ENCODE measurements at regions of chr15 and their contacts with region 1.

Region 1: DNA sequence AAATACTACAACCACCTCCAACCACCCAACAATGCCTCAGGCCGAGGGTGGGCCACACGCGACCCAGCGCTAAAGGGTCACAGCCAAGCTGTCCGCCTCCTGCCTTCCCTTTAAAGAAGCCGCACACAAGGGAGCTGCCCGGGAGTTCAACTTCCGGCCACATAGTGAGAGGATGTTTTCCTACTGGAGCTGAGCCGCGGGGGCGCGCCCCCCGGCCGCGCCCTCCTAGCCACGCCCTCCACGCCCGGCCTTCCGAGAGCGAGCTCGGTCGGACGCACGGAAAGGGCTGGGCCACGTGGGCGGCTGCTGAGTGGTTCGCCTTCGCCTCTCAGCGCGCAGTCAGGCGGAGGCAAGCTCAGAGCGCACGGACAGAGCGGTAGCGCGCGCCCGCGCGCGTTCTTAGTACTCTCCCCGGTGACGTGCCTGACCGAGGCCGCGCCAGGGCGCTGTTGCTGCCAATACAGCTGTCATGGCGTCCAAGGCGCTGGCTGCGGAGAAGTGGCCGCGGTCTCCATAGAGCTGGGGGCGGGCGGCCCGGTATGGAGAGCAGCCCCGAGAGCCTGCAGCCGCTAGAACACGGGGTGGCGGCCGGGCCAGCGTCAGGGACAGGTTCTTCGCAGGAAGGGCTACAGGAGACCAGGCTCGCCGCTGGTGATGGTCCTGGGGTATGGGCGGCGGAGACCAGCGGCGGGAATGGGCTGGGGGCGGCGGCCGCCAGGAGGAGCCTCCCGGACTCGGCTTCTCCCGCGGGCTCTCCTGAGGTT is at the start of gene MINDY2:
- DNase-seq: peak; percentile 93 to 99 (median 94)
- ATAC-seq: peak; percentile 96
- H3K4me3 ChIP-seq: peak within 1 kb of the TSS; percentile 98
- H3K27ac ChIP-seq: peak within 1 kb of the TSS; percentile 91
- H3K4me1 ChIP-seq: peaks cover 13 to 19% of the 10 kb centered on the region in 2 experiments; a peak in 4 of 5 replicates
- H3K27me3 ChIP-seq: no peaks in the 10 kb centered on the region
- CTCF ChIP-seq: peak; percentile 45 to 65 (median 58)
- EP300 ChIP-seq: peak; percentile 55; the same call in 1 of the 2 replicates
- POLR2A ChIP-seq: peak; percentile 91
- RAD21 ChIP-seq: peak; percentile 14 to 34; a peak in 2 of 4 replicates
- polyA plus RNA-seq, gene MINDY2: 2.4 to 3.8 TPM

Region 2: DNA sequence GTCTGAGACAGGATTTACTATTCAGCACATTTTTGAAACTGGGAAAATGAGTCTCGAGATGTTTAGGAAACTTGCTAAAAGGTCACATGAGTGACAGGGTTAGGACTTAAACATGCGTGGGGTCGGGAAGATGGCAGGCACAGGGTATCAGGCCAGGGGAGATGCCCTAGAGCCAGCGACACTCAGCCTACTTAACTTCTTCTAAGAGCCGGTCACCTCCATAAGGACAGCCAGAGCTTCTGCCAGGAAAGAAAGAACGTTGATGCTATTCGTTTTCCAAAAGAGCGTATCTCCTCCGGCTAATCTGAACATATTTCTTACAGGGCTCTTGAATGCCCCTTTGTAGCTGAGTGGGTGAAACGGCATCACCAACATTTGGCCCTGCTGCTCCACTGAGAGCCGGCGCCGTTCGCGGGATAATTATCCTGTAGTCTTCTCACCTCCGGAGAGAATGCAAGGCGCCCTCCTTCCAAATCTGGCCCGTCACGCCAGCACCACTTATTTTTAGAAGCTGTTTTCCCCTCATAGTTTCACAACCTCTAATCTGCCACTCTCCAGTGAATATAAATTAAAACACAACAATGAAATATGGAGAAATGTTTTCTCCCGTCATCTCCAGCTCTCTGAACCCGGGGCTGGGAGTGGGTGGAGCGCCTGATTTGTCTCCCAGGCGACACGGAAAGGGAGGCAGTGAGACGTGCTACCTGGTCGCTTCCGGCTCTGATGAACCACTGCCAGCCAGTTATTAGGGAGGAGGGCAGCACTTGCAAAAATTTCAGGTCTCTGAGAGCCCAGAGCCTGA is 280.8 kb before region 1 on chr15:
- CTCF ChIA-PET with region 1: no interaction called
- POLR2A ChIA-PET with region 1: no interaction called
- in situ Hi-C with region 1: no loop called
- intact Hi-C with region 1: no loop called
- DNase-seq: no peak
- ATAC-seq: no peak
- H3K4me3 ChIP-seq: no peak overlapping the region
- H3K27ac ChIP-seq: no peak overlapping the region
- H3K4me1 ChIP-seq: peaks cover 12 to 20% of the 10 kb centered on the region in 2 experiments; a peak in 4 of 5 replicates
- H3K27me3 ChIP-seq: no peaks in the 10 kb centered on the region
- CTCF ChIP-seq: no peak
- EP300 ChIP-seq: no peak
- POLR2A ChIP-seq: no peak
- RAD21 ChIP-seq: no peak

Region 3: DNA sequence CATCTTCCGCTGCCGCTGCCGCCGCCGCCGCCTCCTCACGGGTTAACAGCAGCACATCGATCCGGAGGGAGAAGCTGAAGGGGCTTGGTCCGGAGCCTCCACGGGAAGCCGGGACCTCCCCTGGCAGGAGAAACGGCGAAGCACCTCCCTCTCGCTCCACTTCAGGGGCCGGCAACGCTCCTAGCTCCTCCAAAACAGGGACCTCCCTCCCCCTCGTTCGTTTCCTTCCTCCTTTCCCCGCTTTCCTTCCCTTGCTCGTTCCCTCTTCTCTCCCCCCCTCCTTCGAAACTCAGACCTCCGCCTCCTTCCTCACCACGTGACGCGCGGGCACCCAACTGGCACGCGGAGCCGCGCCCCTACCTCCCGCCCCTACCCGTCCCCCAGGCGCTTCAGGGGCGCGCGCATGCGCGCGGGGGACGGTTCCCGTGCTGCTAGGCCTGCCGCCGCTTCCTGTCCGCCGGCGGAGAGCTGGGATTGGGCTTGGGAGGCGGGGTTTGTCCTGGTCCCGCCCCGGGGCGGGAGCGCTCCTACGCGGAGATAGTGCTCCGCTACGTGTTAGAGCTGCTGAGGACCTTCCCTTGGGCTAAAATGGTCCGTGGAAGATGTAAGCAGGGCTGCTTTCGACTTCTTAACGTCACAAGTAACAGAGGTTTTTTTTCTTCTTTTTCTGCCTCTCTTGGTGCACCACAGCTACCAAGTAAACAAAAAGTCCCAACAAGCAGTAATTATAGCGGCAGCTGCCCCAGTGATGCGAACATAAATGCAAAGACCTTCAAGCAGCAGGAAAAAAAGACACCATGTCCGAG is 21.3 kb before region 1 on chr15 and contains the start of gene ADAM10:
- CTCF ChIA-PET with region 1: no interaction called
- POLR2A ChIA-PET with region 1: interaction called, 29 read pairs
- in situ Hi-C with region 1: no loop called
- intact Hi-C with region 1: loop called (anchors 1 kb)
- DNase-seq: peak; percentile 99
- ATAC-seq: peak; percentile 87
- H3K4me3 ChIP-seq: peak within 1 kb of the TSS; percentile 89
- H3K27ac ChIP-seq: peak within 1 kb of the TSS; percentile 92
- H3K4me1 ChIP-seq: peaks cover 5 to 19% of the 10 kb centered on the region in 2 experiments; a peak in 4 of 5 replicates
- H3K27me3 ChIP-seq: no peaks in the 10 kb centered on the region
- CTCF ChIP-seq: no peak
- EP300 ChIP-seq: no peak
- POLR2A ChIP-seq: peak; percentile 91
- RAD21 ChIP-seq: no peak
- polyA plus RNA-seq, gene ADAM10: 11.9 to 14.0 TPM

Region 4: GRCh38 chr15:58758138-58758537 is 12.9 kb before region 1 on chr15:
- CTCF ChIA-PET with region 1: no interaction called
- POLR2A ChIA-PET with region 1: interaction called, 16 read pairs
- in situ Hi-C with region 1: no loop called
- intact Hi-C with region 1: no loop called
- DNase-seq: peak in 2 of 4 experiments; percentile 28 to 36
- ATAC-seq: peak; percentile 72
- H3K4me3 ChIP-seq: no peak overlapping the region
- H3K27ac ChIP-seq: no peak overlapping the region
- H3K4me1 ChIP-seq: peaks cover 0 to 9% of the 10 kb centered on the region in 2 experiments; a peak in 2 of 5 replicates
- H3K27me3 ChIP-seq: no peaks in the 10 kb centered on the region
- CTCF ChIP-seq: peak; percentile 21 to 57 (median 37); a peak in 3 of 6 replicates
- EP300 ChIP-seq: no peak
- POLR2A ChIP-seq: no peak
- RAD21 ChIP-seq: peak; percentile 59 to 71

Region 5: GRCh38 chr15:58830556-58830955 is 59.5 kb after region 1 on chr15:
- CTCF ChIA-PET with region 1: no interaction called
- POLR2A ChIA-PET with region 1: interaction called, 4 read pairs
- in situ Hi-C with region 1: no loop called
- intact Hi-C with region 1: loop called (anchors 5 kb)
- DNase-seq: no peak
- ATAC-seq: no peak; the same call in none of the 3 replicates
- H3K4me3 ChIP-seq: no peak overlapping the region
- H3K27ac ChIP-seq: no peak overlapping the region
- H3K4me1 ChIP-seq: peaks cover 20 to 24% of the 10 kb centered on the region in 2 experiments
- H3K27me3 ChIP-seq: no peaks in the 10 kb centered on the region
- CTCF ChIP-seq: no peak
- EP300 ChIP-seq: no peak
- POLR2A ChIP-seq: no peak
- RAD21 ChIP-seq: no peak

Region 6: GRCh38 chr15:58933281-58934113 is 162.5 kb after region 1 on chr15 and contains the start of gene SLTM:
- CTCF ChIA-PET with region 1: no interaction called
- POLR2A ChIA-PET with region 1: interaction called, 3 read pairs
- in situ Hi-C with region 1: no loop called
- intact Hi-C with region 1: loop called (anchors 5 kb)
- DNase-seq: peak; percentile 91 to 96 (median 94)
- ATAC-seq: peak; percentile 96
- H3K4me3 ChIP-seq: peak within 1 kb of the TSS; percentile 70
- H3K27ac ChIP-seq: peak within 1 kb of the TSS; percentile 89
- H3K4me1 ChIP-seq: peaks cover 0 to 15% of the 10 kb centered on the region in 2 experiments; a peak in 4 of 5 replicates
- H3K27me3 ChIP-seq: no peaks in the 10 kb centered on the region
- CTCF ChIP-seq: no peak; a peak in 1 of 6 replicates
- EP300 ChIP-seq: no peak
- POLR2A ChIP-seq: peak; percentile 96
- RAD21 ChIP-seq: no peak
- polyA plus RNA-seq, gene SLTM: 61.4 to 69.7 TPM